CD4-positive, alpha-beta memory T cell (primary cell): ENCODE measurements at regions of chr13 and their contacts with region 1.

Region 1: GRCh38 chr13:29595380-29596063 is at the start of gene SLC7A1:
- DNase-seq: peak; percentile 80 to 90 (median 88)
- H3K4me3 ChIP-seq: peak within 1 kb of the TSS; percentile 59 to 61
- H3K4me3 Mint-ChIP-seq: peak within 1 kb of the TSS; percentile 87 to 94 (median 92)
- H3K27ac ChIP-seq: peak within 1 kb of the TSS; percentile 66
- H3K27ac Mint-ChIP-seq: peak within 1 kb of the TSS; percentile 90 to 97 (median 93)
- H3K4me1 ChIP-seq: peaks cover 25% of the 10 kb centered on the region
- H3K4me1 Mint-ChIP-seq: peaks cover 22 to 49% (median 34%) of the 10 kb centered on the region in 4 donors
- H3K27me3 ChIP-seq: no peaks in the 10 kb centered on the region
- H3K27me3 Mint-ChIP-seq: peaks cover 0 to 1% of the 10 kb centered on the region in 2 donors
- total RNA-seq, gene SLC7A1: 38.6 to 42.6 TPM

Region 2: GRCh38 chr13:28885181-28885580 is 710.3 kb before region 1 on chr13:
- CTCF ChIA-PET with region 1: no interaction called
- POLR2A ChIA-PET with region 1: no interaction called
- intact Hi-C with region 1: no loop called
- DNase-seq: no peak
- H3K4me3 ChIP-seq: no peak overlapping the region
- H3K4me3 Mint-ChIP-seq: no peak overlapping the region
- H3K27ac ChIP-seq: no peak overlapping the region
- H3K27ac Mint-ChIP-seq: no peak overlapping the region
- H3K4me1 ChIP-seq: no peaks in the 10 kb centered on the region
- H3K4me1 Mint-ChIP-seq: no peaks in the 10 kb centered on the region
- H3K27me3 ChIP-seq: no peaks in the 10 kb centered on the region
- H3K27me3 Mint-ChIP-seq: peaks cover 0 to 2% of the 10 kb centered on the region in 2 donors

Region 3: DNA sequence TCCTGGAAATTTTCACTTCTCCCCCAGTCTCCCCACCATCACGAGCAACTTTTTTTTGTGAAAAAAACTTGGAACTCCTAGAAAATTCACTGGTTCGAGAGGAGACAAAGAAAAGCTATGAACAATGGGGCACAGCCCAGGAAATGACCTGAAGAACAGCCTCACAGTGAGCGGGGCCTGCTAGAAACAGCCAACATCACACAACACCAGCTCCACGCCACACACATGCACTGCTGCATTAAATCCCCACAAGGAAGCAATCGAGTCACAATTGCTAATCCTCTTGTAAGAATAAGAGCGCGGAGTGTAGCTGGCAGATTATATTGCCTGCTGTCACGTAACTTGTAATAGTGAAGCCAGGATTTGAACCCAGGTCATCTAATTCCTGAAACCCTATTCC is 48.9 kb before region 1 on chr13:
- CTCF ChIA-PET with region 1: no interaction called
- POLR2A ChIA-PET with region 1: no interaction called
- intact Hi-C with region 1: loop called (anchors 1 kb)
- DNase-seq: no peak
- H3K4me3 ChIP-seq: no peak overlapping the region
- H3K4me3 Mint-ChIP-seq: no peak overlapping the region
- H3K27ac ChIP-seq: no peak overlapping the region
- H3K27ac Mint-ChIP-seq: peak overlapping the region in 1 of 7 donors; percentile 5
- H3K4me1 ChIP-seq: no peaks in the 10 kb centered on the region
- H3K4me1 Mint-ChIP-seq: peaks cover 10 to 21% (median 16%) of the 10 kb centered on the region in 4 donors
- H3K27me3 ChIP-seq: no peaks in the 10 kb centered on the region
- H3K27me3 Mint-ChIP-seq: no peaks in the 10 kb centered on the region

Region 4: DNA sequence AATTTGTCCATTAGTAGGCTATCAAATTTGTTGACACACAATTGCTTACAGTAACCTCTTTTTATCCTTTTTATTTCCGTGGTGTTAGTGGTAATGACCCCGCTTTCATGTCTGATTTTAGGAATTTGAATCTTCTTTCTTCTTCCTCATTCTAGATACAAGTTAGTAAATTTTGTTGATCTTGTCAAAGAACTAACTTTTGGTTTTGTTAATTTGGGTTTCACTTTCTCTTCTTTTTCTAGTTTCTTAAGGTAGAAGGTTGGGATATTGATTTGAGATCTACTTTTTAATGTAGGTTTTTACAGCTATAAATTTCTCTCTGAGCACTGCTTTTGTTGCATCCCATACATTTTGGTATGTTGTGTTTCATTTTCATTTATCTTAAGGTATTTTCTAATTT is 53.2 kb after region 1 on chr13:
- CTCF ChIA-PET with region 1: no interaction called
- POLR2A ChIA-PET with region 1: interaction called, 10 read pairs
- intact Hi-C with region 1: no loop called
- DNase-seq: no peak
- H3K4me3 ChIP-seq: no peak overlapping the region
- H3K4me3 Mint-ChIP-seq: peak overlapping the region in 7 of 8 donors; percentile 46 to 86 (median 84)
- H3K27ac ChIP-seq: no peak overlapping the region
- H3K27ac Mint-ChIP-seq: peak overlapping the region in 5 of 7 donors; percentile 61 to 86 (median 70)
- H3K4me1 ChIP-seq: peaks cover 5% of the 10 kb centered on the region
- H3K4me1 Mint-ChIP-seq: peaks cover 0 to 11% (median 5%) of the 10 kb centered on the region in 4 donors
- H3K27me3 ChIP-seq: no peaks in the 10 kb centered on the region
- H3K27me3 Mint-ChIP-seq: peaks cover 3 to 7% of the 10 kb centered on the region in 2 donors